ENCODE measurements at regions of chr1 and their contacts with region 1.

Region 1: GRCh38 chr1:2194898-2195673 is 514 bp upstream of the FAAP20 start:
- DNase-seq: peak; percentile 88
- H3K4me3 Mint-ChIP-seq: peak overlapping the region; percentile 84
- H3K27ac Mint-ChIP-seq: peak overlapping the region; percentile 90
- H3K4me1 Mint-ChIP-seq: peaks cover 20% of the 10 kb centered on the region
- H3K27me3 Mint-ChIP-seq: no peaks in the 10 kb centered on the region

Region 2: DNA sequence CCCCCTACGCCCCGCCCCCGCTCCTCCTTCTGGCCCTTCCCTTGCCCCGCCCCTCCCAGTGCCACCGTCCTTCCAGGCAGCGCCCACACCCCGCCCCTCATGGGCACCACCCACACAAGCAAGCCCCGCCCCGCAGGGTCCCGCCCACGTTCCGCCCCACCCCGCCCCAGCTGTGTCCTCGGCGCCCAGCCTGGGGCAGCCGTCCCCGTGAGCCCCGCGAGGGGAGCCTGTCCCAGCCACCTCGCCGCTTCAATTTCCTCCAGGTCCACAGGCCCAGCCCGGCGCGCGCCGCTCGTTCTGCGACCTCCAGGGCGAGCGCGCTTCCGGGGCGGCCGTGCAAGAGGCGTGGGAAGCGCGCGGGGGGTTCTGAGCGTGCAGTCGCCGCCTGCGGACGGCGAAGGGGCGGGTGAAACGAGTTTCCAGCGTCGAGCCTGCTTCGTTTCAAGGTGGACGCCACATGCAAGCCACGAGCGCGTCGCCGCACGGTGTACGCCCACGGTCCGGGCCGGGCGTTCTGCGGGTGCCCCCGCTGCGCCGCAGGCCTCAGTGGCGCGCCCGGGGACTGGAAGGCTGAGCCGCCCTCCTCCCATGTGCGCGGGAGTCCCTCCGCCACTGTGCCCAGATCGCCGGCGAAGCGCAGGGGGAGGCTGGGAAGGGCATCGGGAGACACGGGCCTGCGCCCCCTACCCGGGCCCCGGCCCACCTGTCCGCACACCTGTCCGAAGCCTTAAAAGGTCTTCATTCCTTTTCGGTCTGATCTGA is 10.3 kb after region 1 on chr1:
- intact Hi-C with region 1: loop called (anchors 1 kb)
- DNase-seq: peak; percentile 85
- H3K4me3 Mint-ChIP-seq: peak overlapping the region; percentile 37
- H3K27ac Mint-ChIP-seq: no peak overlapping the region
- H3K4me1 Mint-ChIP-seq: no peaks in the 10 kb centered on the region
- H3K27me3 Mint-ChIP-seq: no peaks in the 10 kb centered on the region

Region 3: DNA sequence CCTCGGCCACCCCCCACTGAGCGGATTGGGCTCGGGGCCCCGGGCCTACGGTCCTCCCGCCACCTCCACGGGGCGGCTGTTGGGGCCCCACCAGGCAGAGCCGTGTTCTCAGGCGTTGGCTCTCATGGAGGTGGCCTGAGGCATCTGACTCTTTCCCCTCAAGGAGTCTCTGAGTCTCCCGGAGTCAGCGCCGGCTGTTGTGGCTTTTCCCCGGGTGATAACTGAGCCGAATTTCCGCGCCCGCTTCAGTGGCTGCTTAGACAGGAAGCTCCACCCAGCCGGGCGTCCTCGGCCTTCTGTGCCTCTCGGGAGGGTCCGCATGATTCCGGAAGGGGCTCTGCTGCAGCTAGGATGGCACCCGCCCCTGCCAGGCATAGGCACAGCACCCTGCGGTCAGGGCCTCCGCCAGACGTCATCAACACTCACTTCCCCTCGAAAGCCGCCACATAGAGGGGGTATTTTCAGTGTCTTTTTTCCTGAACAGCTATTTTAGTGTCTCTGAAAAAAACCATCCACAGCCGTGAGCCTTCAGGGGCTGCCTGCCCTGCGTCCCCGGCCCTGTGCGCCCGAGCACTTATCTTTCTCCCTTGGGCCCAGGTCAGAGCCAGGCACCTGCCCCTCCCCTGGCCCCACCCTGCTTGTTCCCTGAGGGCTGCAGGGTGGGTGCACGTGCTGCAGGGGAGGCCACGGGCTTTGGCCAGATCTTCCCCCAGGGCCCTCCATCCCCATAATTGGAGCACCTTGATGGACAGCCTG is 105.9 kb after region 1 on chr1:
- intact Hi-C with region 1: loop called (anchors 1 kb)
- DNase-seq: peak; percentile 77
- H3K4me3 Mint-ChIP-seq: peak overlapping the region; percentile 77
- H3K27ac Mint-ChIP-seq: peak overlapping the region; percentile 91
- H3K4me1 Mint-ChIP-seq: peaks cover 35% of the 10 kb centered on the region
- H3K27me3 Mint-ChIP-seq: no peaks in the 10 kb centered on the region

Region 4: GRCh38 chr1:2391041-2391930 is 196.2 kb after region 1 on chr1 and contains the starts of genes MORN1 and RER1:
- intact Hi-C with region 1: loop called (anchors 1 kb)
- DNase-seq: peak; percentile 99
- H3K4me3 Mint-ChIP-seq: peak within 1 kb of the TSS; percentile 88
- H3K27ac Mint-ChIP-seq: peak within 1 kb of the TSS; percentile 82
- H3K4me1 Mint-ChIP-seq: peaks cover 28% of the 10 kb centered on the region
- H3K27me3 Mint-ChIP-seq: no peaks in the 10 kb centered on the region
- total RNA-seq, gene MORN1: 8.4 and 8.6 TPM in 2 replicates
- total RNA-seq, gene RER1: 161 and 177 TPM in 2 replicates

Region 5: GRCh38 chr1:2586154-2587070 is 391.3 kb after region 1 on chr1 and contains the start of gene PRXL2B:
- intact Hi-C with region 1: loop called (anchors 2 kb)
- DNase-seq: peak; percentile 98
- H3K4me3 Mint-ChIP-seq: peak within 1 kb of the TSS; percentile 86
- H3K27ac Mint-ChIP-seq: peak within 1 kb of the TSS; percentile 94
- H3K4me1 Mint-ChIP-seq: peaks cover 40% of the 10 kb centered on the region
- H3K27me3 Mint-ChIP-seq: no peaks in the 10 kb centered on the region
- total RNA-seq, gene PRXL2B: 39.5 and 42.1 TPM in 2 replicates

Measured in activated T-helper 1 cell treated with anti-CD3 and anti-CD28 coated beads, Interleukin-12 subunit alpha, Interleukin-12 subunit beta, Interleukin-2, Interleukin-4 antibody, amounts not matched to agents 30 ng/mL and 10 ng/mL and 1 ng/mL, durations not matched to agents 14 hours and 24 hours and 36 hours (primary cell).